ENCODE measurements at regions of chr13 and their contacts with region 1.

Region 1: DNA sequence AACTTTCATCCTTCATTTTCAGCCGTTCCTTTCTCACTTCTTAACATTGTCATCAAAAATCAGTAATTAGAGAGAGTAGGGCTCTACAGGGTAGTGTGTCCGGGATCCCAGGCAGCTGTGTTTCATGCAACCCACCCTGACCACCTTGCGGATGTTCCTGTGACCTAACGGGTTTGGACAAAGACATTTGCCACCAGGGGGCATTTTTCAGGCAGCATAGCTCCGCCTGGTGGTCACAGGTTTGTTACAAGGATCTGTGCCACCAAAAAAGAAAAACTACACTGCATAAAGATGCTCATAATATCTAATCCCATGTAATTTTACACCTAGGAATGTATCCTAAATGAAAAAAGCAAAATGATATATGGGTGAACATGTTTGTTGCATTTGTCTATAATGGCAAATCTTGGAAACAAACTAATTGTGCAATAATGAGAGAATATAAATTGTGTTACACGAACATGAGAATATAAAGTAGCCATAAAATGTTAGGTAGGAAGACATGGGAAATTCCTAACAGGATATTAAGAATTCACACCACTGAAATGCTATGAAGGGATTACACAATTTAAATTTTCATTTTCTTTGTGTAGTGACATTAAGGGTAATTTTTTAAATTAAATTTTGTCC is 123.0 kb downstream of the SLC7A1 start:
- DNase-seq: peak; percentile 75
- ATAC-seq: peak; percentile 51
- H3K4me3 Mint-ChIP-seq: no peak overlapping the region
- H3K27ac Mint-ChIP-seq: no peak overlapping the region
- H3K4me1 Mint-ChIP-seq: no peaks in the 10 kb centered on the region
- H3K27me3 Mint-ChIP-seq: no peaks in the 10 kb centered on the region

Region 2: GRCh38 chr13:29459813-29460355 is 12.6 kb before region 1 on chr13:
- CTCF ChIA-PET with region 1: interaction called, 13 read pairs
- POLR2A ChIA-PET with region 1: no interaction called
- intact Hi-C with region 1: no loop called
- DNase-seq: no peak
- ATAC-seq: no peak
- H3K4me3 Mint-ChIP-seq: no peak overlapping the region
- H3K27ac Mint-ChIP-seq: no peak overlapping the region
- H3K4me1 Mint-ChIP-seq: no peaks in the 10 kb centered on the region
- H3K27me3 Mint-ChIP-seq: peaks cover 12% of the 10 kb centered on the region

Region 3: GRCh38 chr13:29664591-29664990 is 192.1 kb after region 1 on chr13:
- CTCF ChIA-PET with region 1: no interaction called
- POLR2A ChIA-PET with region 1: no interaction called
- intact Hi-C with region 1: no loop called
- DNase-seq: no peak
- ATAC-seq: no peak
- H3K4me3 Mint-ChIP-seq: no peak overlapping the region
- H3K27ac Mint-ChIP-seq: no peak overlapping the region
- H3K4me1 Mint-ChIP-seq: no peaks in the 10 kb centered on the region
- H3K27me3 Mint-ChIP-seq: peaks cover 23% of the 10 kb centered on the region

Region 4: GRCh38 chr13:29707876-29708543 is 235.6 kb after region 1 on chr13:
- CTCF ChIA-PET with region 1: interaction called, 4 read pairs
- POLR2A ChIA-PET with region 1: no interaction called
- intact Hi-C with region 1: loop called (anchors 1 to 5 kb)
- DNase-seq: peak; percentile 73
- ATAC-seq: peak; percentile 94
- H3K4me3 Mint-ChIP-seq: no peak overlapping the region
- H3K27ac Mint-ChIP-seq: no peak overlapping the region
- H3K4me1 Mint-ChIP-seq: no peaks in the 10 kb centered on the region
- H3K27me3 Mint-ChIP-seq: peaks cover 7% of the 10 kb centered on the region

Region 5: DNA sequence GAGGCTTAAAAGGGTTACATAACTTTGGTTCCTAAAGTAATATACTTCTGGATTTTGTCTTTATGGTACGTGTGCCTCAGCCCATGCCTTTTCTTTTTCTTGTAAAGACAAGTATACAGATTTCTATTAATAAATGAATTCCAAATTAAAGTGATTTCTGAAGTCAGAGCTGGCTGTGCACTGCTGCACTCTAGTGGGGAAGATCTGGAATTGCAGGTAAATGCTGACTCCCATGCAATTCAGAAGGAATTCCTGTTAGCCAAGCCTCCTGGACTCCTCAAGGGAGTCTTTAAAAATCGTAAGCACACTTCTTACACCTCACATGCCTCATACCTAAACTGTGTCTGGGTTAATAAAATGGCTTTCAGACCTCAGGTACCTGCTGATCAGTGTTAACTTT is 241.4 kb after region 1 on chr13:
- CTCF ChIA-PET with region 1: interaction called, 4 read pairs
- POLR2A ChIA-PET with region 1: no interaction called
- intact Hi-C with region 1: loop called (anchors 1 to 5 kb)
- DNase-seq: peak; percentile 21
- ATAC-seq: no peak
- H3K4me3 Mint-ChIP-seq: no peak overlapping the region
- H3K27ac Mint-ChIP-seq: no peak overlapping the region
- H3K4me1 Mint-ChIP-seq: no peaks in the 10 kb centered on the region
- H3K27me3 Mint-ChIP-seq: peaks cover 2% of the 10 kb centered on the region

Region 6: DNA sequence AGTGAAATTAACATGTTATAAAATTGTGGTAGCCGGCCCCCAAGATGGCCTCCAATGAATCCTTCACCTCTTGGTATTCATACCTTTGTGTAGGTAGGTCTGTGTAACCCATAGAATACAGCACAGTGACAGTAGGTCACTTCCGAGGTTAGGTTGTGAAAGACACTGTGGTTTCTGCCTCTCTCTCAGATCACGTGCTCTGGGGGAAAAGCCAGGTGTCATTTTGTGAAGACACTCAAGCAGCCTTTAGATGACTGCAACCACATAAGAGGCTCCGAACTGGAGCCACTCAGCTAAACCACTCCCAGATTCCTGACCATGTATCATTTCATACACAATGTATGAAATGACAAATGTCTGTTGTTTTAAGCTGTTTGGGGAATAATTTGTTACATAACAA is 1135.5 kb after region 1 on chr13:
- CTCF ChIA-PET with region 1: no interaction called
- POLR2A ChIA-PET with region 1: no interaction called
- intact Hi-C with region 1: no loop called
- DNase-seq: peak; percentile 72
- ATAC-seq: peak; percentile 96
- H3K4me3 Mint-ChIP-seq: no peak overlapping the region
- H3K27ac Mint-ChIP-seq: no peak overlapping the region
- H3K4me1 Mint-ChIP-seq: peaks cover 15% of the 10 kb centered on the region
- H3K27me3 Mint-ChIP-seq: no peaks in the 10 kb centered on the region

Measured in activated CD4-positive, alpha-beta T cell treated with anti-CD3 and anti-CD28 coated beads for 36 hours (primary cell).